Heart left ventricle (tissue), 16 donors: ENCODE measurements at regions of chr1 and their contacts with region 1.

Region 1: GRCh38 chr1:118366286-118366685 is 181.3 kb upstream of the SPAG17 start:
- DNase-seq: no peak
- ATAC-seq: no peak
- H3K4me3 ChIP-seq: no peak overlapping the region
- H3K27ac ChIP-seq: no peak overlapping the region
- H3K4me1 ChIP-seq: no peaks in the 10 kb centered on the region
- H3K27me3 ChIP-seq: no peaks in the 10 kb centered on the region
- CTCF ChIP-seq: no peak
- POLR2A ChIP-seq: no peak

Region 2: DNA sequence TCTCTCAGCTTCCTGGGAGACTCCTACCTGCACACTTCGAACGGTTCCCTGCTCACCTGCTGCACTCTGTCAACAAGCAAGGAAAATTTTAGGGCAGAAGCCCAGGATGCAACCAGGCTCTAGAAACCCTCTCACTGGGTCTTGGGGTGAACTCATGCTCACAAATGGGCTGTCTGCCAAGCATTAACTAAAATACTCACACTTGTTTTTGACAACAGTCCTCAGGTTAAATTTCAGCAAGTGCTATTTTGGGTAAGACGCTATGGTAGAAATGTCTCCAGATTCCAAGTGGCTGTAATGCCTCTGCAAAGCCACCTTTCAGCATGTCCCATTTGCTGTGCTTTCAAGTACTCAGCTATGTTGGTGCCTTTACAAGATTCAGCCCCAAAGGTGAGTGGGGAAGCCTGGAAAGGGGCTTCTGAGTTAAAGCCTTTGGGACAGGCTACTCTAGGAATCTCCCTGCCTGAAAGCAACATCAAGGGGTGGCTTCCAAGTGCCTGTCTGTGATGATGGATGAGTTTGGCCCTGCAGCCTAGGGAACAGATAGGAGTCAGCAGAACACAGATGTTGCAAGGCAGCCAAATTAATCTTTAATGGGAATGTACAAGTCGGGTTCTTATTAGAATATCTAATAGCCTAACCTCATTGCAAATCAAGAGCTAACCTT is 30.7 kb after region 1 on chr1:
- intact Hi-C with region 1: loop called in 1 of 10 experiments (anchors 2 kb)
- DNase-seq: no peak
- ATAC-seq: no peak
- H3K4me3 ChIP-seq: no peak overlapping the region
- H3K27ac ChIP-seq: no peak overlapping the region
- H3K4me1 ChIP-seq: no peaks in the 10 kb centered on the region
- H3K27me3 ChIP-seq: no peaks in the 10 kb centered on the region
- CTCF ChIP-seq: no peak
- POLR2A ChIP-seq: no peak

Region 3: GRCh38 chr1:118429856-118430255 is 63.6 kb after region 1 on chr1:
- intact Hi-C with region 1: no loop called
- DNase-seq: no peak
- ATAC-seq: no peak
- H3K4me3 ChIP-seq: no peak overlapping the region
- H3K27ac ChIP-seq: no peak overlapping the region
- H3K4me1 ChIP-seq: no peaks in the 10 kb centered on the region
- H3K27me3 ChIP-seq: peaks cover 0 to 5% (median 0%) of the 10 kb centered on the region in 9 donors
- CTCF ChIP-seq: no peak
- POLR2A ChIP-seq: no peak